ENCODE measurements at regions of chr1 and their contacts with region 1.

Region 1: GRCh38 chr1:61077676-61078541 is 4.5 kb upstream of the NFIA start:
- DNase-seq: peak; percentile 77 to 99 (median 91)
- ATAC-seq: peak; percentile 68
- H3K4me3 ChIP-seq: peak overlapping the region; percentile 66 to 74
- H3K4me3 Mint-ChIP-seq: peak overlapping the region; percentile 86
- H3K27ac ChIP-seq: peak overlapping the region; percentile 67 to 76
- H3K27ac Mint-ChIP-seq: peak overlapping the region; percentile 98
- H3K4me1 ChIP-seq: peaks cover 42% of the 10 kb centered on the region
- H3K4me1 Mint-ChIP-seq: peaks cover 47% of the 10 kb centered on the region
- H3K27me3 ChIP-seq: no peaks in the 10 kb centered on the region
- H3K27me3 Mint-ChIP-seq: no peaks in the 10 kb centered on the region
- CTCF ChIP-seq: no peak

Region 2: DNA sequence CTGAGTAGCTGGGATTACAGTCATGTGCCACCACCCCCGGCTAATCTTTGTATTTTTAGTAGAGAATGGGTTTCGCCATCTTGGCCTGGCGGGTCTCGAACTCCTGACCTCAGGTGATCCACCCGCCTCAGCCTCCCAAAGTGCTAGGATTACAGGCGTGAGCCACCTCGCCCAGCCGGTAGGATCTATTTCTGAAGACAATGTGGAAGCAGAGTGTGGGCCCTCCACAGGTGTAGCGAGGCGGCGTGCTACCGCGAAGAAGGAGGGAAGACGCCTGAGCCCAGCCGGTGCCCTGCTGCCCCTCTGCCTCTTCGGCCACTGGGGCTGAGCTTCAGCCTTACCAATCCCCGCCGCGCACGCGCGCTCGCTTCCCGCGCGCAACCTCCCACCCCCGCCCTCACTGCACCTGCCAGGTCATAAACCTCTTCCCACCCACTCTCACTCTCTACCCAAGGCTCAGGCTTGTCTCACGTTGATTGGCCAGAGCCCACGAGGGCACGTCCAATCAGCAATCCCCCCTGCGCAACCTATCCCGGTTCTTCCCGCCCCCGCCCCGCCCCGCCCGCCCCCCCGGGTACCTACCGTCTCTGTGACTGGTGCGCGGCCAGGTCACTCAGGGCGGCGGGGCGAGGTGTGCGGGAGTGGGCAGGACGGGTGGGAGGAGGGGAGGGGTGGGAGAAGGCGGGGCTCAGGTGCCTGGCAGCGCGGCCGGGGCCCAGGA is 1263.6 kb before region 1 on chr1:
- CTCF ChIA-PET with region 1: no interaction called
- POLR2A ChIA-PET with region 1: no interaction called
- intact Hi-C with region 1: loop called in 1 of 2 experiments (anchors 10 kb)
- DNase-seq: peak; percentile 73 to 97 (median 88)
- ATAC-seq: peak; percentile 94
- H3K4me3 ChIP-seq: peak overlapping the region; percentile 64 to 72
- H3K4me3 Mint-ChIP-seq: no peak overlapping the region
- H3K27ac ChIP-seq: peak overlapping the region; percentile 43 to 59
- H3K27ac Mint-ChIP-seq: peak overlapping the region; percentile 89
- H3K4me1 ChIP-seq: peaks cover 15% of the 10 kb centered on the region
- H3K4me1 Mint-ChIP-seq: peaks cover 4% of the 10 kb centered on the region
- H3K27me3 ChIP-seq: peaks cover 0 to 4% of the 10 kb centered on the region in 2 experiments
- H3K27me3 Mint-ChIP-seq: peaks cover 7% of the 10 kb centered on the region
- CTCF ChIP-seq: no peak

Region 3: GRCh38 chr1:60367532-60367931 is 710.4 kb before region 1 on chr1:
- CTCF ChIA-PET with region 1: no interaction called
- POLR2A ChIA-PET with region 1: no interaction called
- intact Hi-C with region 1: no loop called
- DNase-seq: no peak
- ATAC-seq: no peak
- H3K4me3 ChIP-seq: no peak overlapping the region
- H3K4me3 Mint-ChIP-seq: no peak overlapping the region
- H3K27ac ChIP-seq: no peak overlapping the region
- H3K27ac Mint-ChIP-seq: no peak overlapping the region
- H3K4me1 ChIP-seq: no peaks in the 10 kb centered on the region
- H3K4me1 Mint-ChIP-seq: no peaks in the 10 kb centered on the region
- H3K27me3 ChIP-seq: no peaks in the 10 kb centered on the region
- H3K27me3 Mint-ChIP-seq: no peaks in the 10 kb centered on the region
- CTCF ChIP-seq: no peak

Region 4: DNA sequence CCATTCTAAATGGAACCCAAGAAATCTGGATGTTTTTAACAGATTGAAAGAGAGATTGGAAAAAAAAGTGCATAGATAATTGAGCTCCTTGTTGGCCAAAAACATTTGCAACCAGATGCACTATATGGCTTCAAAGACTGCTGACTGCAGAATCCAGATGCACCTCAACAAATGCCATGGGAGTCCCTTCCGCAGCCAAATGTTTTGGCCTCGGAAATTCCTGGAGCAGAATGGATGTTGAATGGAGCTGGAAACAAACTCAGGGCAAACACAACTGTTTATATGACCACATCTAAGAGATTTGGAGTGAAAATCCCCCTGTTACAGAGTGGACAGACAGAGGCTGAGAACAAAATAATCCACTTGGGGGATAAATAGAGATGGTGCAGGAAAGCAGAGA is 280.6 kb before region 1 on chr1:
- CTCF ChIA-PET with region 1: no interaction called
- POLR2A ChIA-PET with region 1: no interaction called
- intact Hi-C with region 1: no loop called
- DNase-seq: no peak
- ATAC-seq: no peak
- H3K4me3 ChIP-seq: no peak overlapping the region
- H3K4me3 Mint-ChIP-seq: no peak overlapping the region
- H3K27ac ChIP-seq: no peak overlapping the region
- H3K27ac Mint-ChIP-seq: no peak overlapping the region
- H3K4me1 ChIP-seq: no peaks in the 10 kb centered on the region
- H3K4me1 Mint-ChIP-seq: no peaks in the 10 kb centered on the region
- H3K27me3 ChIP-seq: no peaks in the 10 kb centered on the region
- H3K27me3 Mint-ChIP-seq: peaks cover 2% of the 10 kb centered on the region
- CTCF ChIP-seq: no peak

Region 5: GRCh38 chr1:61056573-61057439 is 21.1 kb before region 1 on chr1:
- CTCF ChIA-PET with region 1: interaction called, 42 read pairs
- POLR2A ChIA-PET with region 1: interaction called, 66 read pairs
- intact Hi-C with region 1: no loop called
- DNase-seq: peak in 6 of 9 experiments; percentile 23 to 66 (median 54)
- ATAC-seq: peak; percentile 54
- H3K4me3 ChIP-seq: peak overlapping the region; percentile 53 to 59
- H3K4me3 Mint-ChIP-seq: peak overlapping the region; percentile 86
- H3K27ac ChIP-seq: no peak overlapping the region
- H3K27ac Mint-ChIP-seq: no peak overlapping the region
- H3K4me1 ChIP-seq: peaks cover 22% of the 10 kb centered on the region
- H3K4me1 Mint-ChIP-seq: peaks cover 32% of the 10 kb centered on the region
- H3K27me3 ChIP-seq: peaks cover 0 to 11% of the 10 kb centered on the region in 2 experiments
- H3K27me3 Mint-ChIP-seq: peaks cover 51% of the 10 kb centered on the region
- CTCF ChIP-seq: no peak

Region 6: DNA sequence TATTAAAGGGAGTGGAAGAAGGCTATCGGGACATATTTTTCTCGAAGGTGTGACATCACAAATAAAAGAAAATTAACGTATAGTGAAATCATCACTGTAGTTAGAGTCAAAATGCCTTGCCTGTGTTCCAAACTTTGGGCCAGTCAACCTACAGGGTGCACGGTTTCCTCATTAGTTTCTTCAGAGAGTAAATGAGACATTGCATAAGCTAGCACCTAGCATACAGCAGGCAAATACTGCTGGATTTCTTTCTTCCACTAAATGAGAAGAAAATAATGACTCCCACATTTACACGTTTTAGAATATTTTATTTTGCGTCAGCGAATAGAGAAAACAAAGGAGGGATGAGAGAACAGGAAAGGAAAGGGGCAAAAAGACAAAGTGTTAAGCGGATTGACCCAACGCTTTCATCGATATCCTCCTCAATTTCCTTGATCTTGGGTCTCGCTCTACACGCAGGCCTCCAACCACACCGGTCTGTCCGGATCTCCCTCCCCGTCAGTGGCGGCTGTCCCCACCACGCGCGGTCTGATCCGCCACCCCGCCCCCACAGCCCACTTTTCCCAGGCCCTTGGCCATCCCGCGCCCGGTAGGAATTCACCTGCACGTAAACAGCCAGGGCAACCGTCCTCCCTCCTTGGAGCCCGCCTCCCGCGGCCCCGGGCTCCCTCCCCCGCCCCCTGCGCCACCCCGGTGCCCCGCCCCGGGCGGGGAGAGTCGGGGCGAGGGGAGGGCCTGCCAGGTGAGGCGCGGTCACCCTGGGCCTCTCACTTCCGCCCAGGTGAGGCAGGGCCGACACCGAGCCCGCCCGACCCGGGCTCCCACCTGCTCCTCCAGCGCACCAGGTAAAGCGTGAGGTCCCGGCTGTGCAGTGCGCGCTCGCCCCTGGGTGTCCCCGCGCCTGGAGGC is 664.1 kb after region 1 on chr1 and contains the start of gene PATJ:
- CTCF ChIA-PET with region 1: no interaction called
- POLR2A ChIA-PET with region 1: no interaction called
- intact Hi-C with region 1: loop called in 1 of 2 experiments (anchors 5 kb)
- DNase-seq: peak; percentile 22 to 81 (median 68)
- ATAC-seq: peak; percentile 90
- H3K4me3 ChIP-seq: peak within 1 kb of the TSS; percentile 49 to 78
- H3K4me3 Mint-ChIP-seq: peak within 1 kb of the TSS; percentile 95
- H3K27ac ChIP-seq: peak within 1 kb of the TSS; percentile 60 to 68
- H3K27ac Mint-ChIP-seq: peak within 1 kb of the TSS; percentile 94
- H3K4me1 ChIP-seq: peaks cover 7% of the 10 kb centered on the region
- H3K4me1 Mint-ChIP-seq: peaks cover 31% of the 10 kb centered on the region
- H3K27me3 ChIP-seq: no peaks in the 10 kb centered on the region
- H3K27me3 Mint-ChIP-seq: no peaks in the 10 kb centered on the region
- CTCF ChIP-seq: no peak
- total RNA-seq, gene PATJ: 33.7 to 35.4 TPM

Region 7: GRCh38 chr1:62783723-62784508 is 1706.0 kb after region 1 on chr1 and contains the start of gene ATG4C:
- CTCF ChIA-PET with region 1: no interaction called
- POLR2A ChIA-PET with region 1: no interaction called
- intact Hi-C with region 1: loop called in 1 of 2 experiments (anchors 10 kb)
- DNase-seq: peak; percentile 82 to 97 (median 91)
- ATAC-seq: peak; percentile 95
- H3K4me3 ChIP-seq: peak within 1 kb of the TSS; percentile 82 to 97
- H3K4me3 Mint-ChIP-seq: no peak within 1 kb of the TSS
- H3K27ac ChIP-seq: peak within 1 kb of the TSS; percentile 90 to 96
- H3K27ac Mint-ChIP-seq: no peak within 1 kb of the TSS
- H3K4me1 ChIP-seq: peaks cover 11% of the 10 kb centered on the region
- H3K4me1 Mint-ChIP-seq: peaks cover 16% of the 10 kb centered on the region
- H3K27me3 ChIP-seq: peaks cover 0 to 2% of the 10 kb centered on the region in 2 experiments
- H3K27me3 Mint-ChIP-seq: peaks cover 10% of the 10 kb centered on the region
- CTCF ChIP-seq: no peak
- total RNA-seq, gene ATG4C: 2.7 to 6.3 TPM

Measured in CD8-positive, alpha-beta T cell (primary cell).